Activated naive CD4-positive, alpha-beta T cell treated with anti-CD3 and anti-CD28 coated beads for 36 hours (primary cell): ENCODE measurements at regions of chr3 and their contacts with region 1.

Region 1: DNA sequence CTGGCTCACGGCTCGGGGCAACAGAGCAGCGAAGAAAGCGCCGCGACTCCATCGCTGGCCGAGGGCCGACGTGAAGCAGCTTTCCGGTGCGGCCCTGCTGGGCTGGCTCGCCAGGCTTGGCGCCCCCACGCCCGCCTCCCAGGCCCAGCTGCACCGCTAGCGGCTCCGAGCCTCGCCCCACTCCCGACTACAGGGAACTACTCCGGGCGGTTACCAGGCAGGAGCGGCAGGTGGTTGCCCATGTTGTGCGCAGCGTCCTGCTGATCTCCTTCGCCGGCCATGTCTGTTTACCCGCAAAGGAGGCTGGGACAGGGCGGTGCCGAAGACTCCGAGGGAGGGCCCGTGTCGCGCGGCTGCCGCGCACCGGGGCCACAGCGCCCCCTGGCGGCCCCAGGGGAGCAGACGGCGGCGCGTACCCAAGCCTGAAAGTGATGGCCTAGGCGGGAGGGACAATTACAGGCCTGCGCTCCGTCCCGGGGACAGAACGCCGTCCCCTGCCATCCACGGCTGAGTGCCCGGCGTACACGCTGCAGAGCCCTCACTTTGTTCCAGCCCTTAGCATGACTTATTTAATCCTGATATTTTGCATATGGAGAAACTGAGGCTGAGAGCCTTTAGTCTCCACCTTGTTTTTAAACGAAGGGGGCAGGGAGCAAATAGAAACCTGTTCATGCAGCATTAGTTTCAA is at the start of gene CRBN:
- DNase-seq: peak; percentile 90
- H3K4me3 Mint-ChIP-seq: peak within 1 kb of the TSS; percentile 93
- H3K27ac Mint-ChIP-seq: peak within 1 kb of the TSS; percentile 93
- H3K4me1 Mint-ChIP-seq: peaks cover 47% of the 10 kb centered on the region
- H3K27me3 Mint-ChIP-seq: no peaks in the 10 kb centered on the region
- total RNA-seq, gene CRBN: 44.1 to 48.0 TPM

Region 2: GRCh38 chr3:2929574-2929973 is 250.0 kb before region 1 on chr3:
- CTCF ChIA-PET with region 1: interaction called, 3 read pairs
- intact Hi-C with region 1: loop called (anchors 2 kb)
- DNase-seq: no peak
- H3K4me3 Mint-ChIP-seq: no peak overlapping the region
- H3K27ac Mint-ChIP-seq: no peak overlapping the region
- H3K4me1 Mint-ChIP-seq: peaks cover 2% of the 10 kb centered on the region
- H3K27me3 Mint-ChIP-seq: peaks cover 2% of the 10 kb centered on the region

Region 3: DNA sequence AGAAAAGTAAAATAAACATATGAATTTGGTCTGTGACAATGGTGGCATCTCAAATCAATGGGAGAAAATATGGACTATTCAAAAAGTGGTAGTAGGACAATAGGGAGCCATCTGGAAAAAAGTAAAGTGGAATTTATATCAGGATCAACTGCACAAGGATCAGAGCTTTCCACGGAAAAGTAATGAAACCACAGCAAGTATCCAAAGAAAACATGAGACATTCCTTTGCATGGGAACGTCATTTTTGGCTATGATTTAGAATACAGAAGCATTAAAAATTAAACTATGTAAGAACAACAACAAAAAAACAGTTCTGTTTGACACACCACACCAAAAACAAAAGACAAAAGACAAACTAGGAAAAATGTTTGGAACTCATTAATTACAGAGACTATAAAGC is 18.7 kb before region 1 on chr3:
- CTCF ChIA-PET with region 1: no interaction called
- intact Hi-C with region 1: loop called (anchors 1 kb)
- DNase-seq: no peak
- H3K4me3 Mint-ChIP-seq: no peak overlapping the region
- H3K27ac Mint-ChIP-seq: peak overlapping the region; percentile 51
- H3K4me1 Mint-ChIP-seq: peaks cover 54% of the 10 kb centered on the region
- H3K27me3 Mint-ChIP-seq: no peaks in the 10 kb centered on the region

Region 4: DNA sequence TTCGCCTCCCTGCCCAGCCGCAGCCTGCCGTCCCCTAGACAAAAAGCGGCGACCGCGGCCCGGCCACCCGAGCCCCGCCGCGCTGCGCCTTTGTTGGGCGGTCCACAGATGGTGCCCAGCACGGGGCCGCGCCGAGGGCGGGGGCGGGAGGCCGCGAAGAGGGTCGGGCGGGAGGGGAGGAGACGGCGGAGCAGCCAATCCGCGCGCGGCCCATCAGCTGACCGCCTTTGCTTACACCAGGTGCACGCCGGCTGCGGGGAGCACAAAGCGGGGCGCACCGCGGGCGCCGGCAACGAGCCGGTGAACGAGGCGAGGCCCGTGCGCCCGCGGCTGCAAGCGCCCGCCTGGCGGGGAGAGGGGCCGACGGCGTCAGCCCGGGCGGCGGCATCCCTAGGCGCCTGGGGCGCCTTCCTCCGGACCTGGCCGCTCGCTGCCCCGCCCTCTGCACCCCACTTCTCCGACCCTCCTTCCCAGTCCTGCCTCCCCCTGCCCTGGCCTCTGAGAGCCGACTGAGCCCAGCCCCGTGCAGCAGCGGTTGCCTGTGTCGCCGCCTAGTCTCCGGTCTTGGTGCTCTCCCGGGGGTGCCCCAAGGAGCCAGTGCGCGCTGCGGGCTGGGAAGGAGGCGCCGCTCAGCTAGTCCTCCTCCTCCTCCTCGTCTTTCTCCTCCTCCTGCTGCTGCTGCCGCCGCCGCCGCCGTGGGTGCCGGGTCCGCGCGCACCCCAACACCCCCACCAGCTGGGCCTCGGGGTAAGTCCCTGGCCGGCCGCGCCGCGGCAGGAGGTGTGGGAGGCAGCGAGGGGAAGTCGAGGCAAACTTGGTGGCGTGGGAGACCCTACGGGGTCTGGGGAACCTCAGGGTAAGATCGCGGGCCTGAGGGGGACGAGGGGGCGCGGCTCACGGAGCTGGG is 619.9 kb after region 1 on chr3 and contains the start of gene LRRN1:
- CTCF ChIA-PET with region 1: no interaction called
- intact Hi-C with region 1: loop called (anchors 2 kb)
- DNase-seq: peak; percentile 74
- H3K4me3 Mint-ChIP-seq: peak within 1 kb of the TSS; percentile 82
- H3K27ac Mint-ChIP-seq: no peak within 1 kb of the TSS
- H3K4me1 Mint-ChIP-seq: peaks cover 17% of the 10 kb centered on the region
- H3K27me3 Mint-ChIP-seq: peaks cover 28% of the 10 kb centered on the region
- total RNA-seq, gene LRRN1: 0.49 to 0.67 TPM

Region 5: GRCh38 chr3:4584456-4585249 is 1405.1 kb after region 1 on chr3:
- CTCF ChIA-PET with region 1: no interaction called
- intact Hi-C with region 1: loop called (anchors 5 kb)
- DNase-seq: peak; percentile 72
- H3K4me3 Mint-ChIP-seq: peak overlapping the region; percentile 70
- H3K27ac Mint-ChIP-seq: peak overlapping the region; percentile 83
- H3K4me1 Mint-ChIP-seq: peaks cover 61% of the 10 kb centered on the region
- H3K27me3 Mint-ChIP-seq: no peaks in the 10 kb centered on the region